ENCODE measurements at regions of chr16 and their contacts with region 1.

Region 1: GRCh38 chr16:67372664-67373063 is 20.6 kb downstream of the TPPP3 start:
- DNase-seq: peak; percentile 57
- H3K4me3 ChIP-seq: no peak overlapping the region; a peak in 1 of 4 replicates
- H3K27ac ChIP-seq: no peak overlapping the region
- H3K4me1 ChIP-seq: no peaks in the 10 kb centered on the region
- H3K27me3 ChIP-seq: no peaks in the 10 kb centered on the region; the same call in 1 of the 2 replicates
- CTCF ChIP-seq: peak; percentile 72
- EP300 ChIP-seq: no peak
- RAD21 ChIP-seq: peak; percentile 83

Region 2: DNA sequence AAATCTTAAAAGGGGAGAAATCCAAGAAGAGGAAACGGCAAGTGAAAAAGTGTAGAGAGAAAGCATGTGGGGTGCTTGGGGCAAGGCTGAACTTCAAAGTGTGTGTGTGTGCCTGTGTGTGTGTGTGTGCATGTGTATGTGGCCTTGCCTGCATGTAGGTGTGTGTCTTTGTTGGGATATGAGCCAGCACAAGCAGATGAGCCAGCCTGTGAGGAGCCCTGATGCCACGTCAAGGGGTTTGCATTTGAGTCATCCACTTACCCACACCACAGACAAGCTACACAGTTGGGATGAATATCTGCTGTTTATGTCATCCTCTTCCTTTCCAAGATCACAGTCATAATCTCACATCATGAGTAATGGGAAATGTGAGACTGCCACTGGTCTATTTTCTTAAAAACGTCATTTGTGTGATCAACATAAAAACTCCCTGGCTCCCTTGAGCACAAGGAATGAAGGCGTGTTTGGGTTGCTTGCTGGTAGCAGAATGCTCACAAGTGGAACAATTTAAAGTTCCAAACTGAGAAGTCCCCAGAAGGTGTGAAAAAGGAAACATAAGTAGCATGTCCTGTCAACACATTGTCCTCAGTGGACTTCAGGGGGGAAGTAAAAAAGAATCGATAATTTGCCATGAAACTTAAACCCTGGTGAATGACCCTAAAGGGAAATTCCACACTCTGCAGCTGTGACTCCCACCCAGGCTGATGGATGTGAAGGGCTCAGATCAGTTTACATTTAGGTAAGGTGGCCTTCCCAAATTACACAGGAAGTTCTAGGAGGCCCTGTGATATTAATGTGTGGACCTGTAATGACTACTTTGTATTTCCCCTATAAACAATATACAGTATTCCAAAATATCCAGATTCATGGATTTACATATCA is 60.8 kb before region 1 on chr16:
- CTCF ChIA-PET with region 1: no interaction called
- POLR2A ChIA-PET with region 1: no interaction called
- DNase-seq: peak; percentile 21
- H3K4me3 ChIP-seq: no peak overlapping the region
- H3K27ac ChIP-seq: peak overlapping the region in 1 of 2 experiments; percentile 93; a peak in 2 of 4 replicates
- H3K4me1 ChIP-seq: peaks cover 0 to 13% of the 10 kb centered on the region in 2 experiments; a peak in 1 of 4 replicates
- H3K27me3 ChIP-seq: no peaks in the 10 kb centered on the region
- CTCF ChIP-seq: no peak
- EP300 ChIP-seq: peak in 1 of 2 experiments; percentile 62; a peak in 1 of 4 replicates
- RAD21 ChIP-seq: no peak

Region 3: DNA sequence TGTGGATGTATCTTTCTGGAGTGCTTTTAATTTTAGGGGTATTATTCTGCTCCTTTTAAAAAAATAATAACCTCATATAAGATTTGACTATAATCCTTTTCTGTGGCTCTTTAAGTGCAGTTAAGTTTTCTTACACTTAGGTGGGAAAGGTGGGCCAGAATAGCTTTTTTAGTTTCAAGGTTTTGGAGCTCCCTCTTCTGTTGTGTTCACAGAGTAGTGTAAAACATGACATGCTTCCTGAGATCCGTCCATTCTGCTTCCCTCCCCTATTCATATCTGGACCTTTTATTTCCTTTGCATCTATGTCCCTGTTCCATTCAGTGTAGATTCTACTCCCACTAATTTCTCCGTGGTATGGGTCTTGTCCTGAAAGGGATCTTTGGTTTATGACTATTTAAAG is 33.2 kb before region 1 on chr16:
- CTCF ChIA-PET with region 1: no interaction called
- POLR2A ChIA-PET with region 1: no interaction called
- DNase-seq: no peak
- H3K4me3 ChIP-seq: no peak overlapping the region
- H3K27ac ChIP-seq: no peak overlapping the region
- H3K4me1 ChIP-seq: no peaks in the 10 kb centered on the region
- H3K27me3 ChIP-seq: no peaks in the 10 kb centered on the region
- CTCF ChIP-seq: peak; percentile 51
- EP300 ChIP-seq: no peak
- RAD21 ChIP-seq: peak; percentile 60

Region 4: DNA sequence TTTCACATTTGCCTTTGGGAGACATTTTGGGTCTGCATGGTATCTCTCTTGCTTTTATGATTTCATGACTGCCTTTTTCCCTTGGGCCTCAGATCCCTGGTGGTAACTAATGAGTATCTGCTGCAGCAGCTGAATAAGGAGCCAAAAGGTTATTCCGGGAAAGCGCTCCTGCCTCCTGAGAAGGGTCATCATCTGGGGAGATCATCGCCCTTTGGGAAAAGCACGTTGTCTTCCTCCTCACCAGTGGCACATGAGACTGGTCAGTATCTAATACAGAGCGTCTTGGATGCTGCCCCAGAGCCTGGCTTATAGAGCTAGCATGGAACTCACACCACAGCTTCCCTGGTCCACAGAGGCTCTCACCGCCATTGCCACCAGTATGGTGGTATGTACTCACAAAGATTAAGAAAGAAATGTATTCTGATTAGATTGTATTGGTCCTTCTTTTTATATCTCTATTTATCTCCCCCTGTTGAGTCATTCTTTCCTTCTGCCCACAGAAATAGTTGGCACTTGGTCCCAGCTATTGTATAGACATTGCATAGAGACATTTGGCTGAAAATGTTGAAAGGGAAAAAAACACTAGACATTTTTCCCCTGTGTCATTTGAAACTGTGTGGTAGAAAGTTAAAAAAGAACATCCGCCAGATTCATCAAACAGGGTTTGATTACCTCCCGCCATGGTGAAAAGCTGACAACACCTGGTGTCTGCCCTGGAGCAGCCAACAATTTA is 12.3 kb after region 1 on chr16:
- CTCF ChIA-PET with region 1: interaction called, 16 read pairs
- POLR2A ChIA-PET with region 1: no interaction called
- DNase-seq: no peak
- H3K4me3 ChIP-seq: no peak overlapping the region
- H3K27ac ChIP-seq: peak overlapping the region in 1 of 2 experiments; percentile 60; a peak in 2 of 4 replicates
- H3K4me1 ChIP-seq: peaks cover 4 to 10% of the 10 kb centered on the region in 2 experiments; a peak in 2 of 4 replicates
- H3K27me3 ChIP-seq: no peaks in the 10 kb centered on the region
- CTCF ChIP-seq: no peak
- EP300 ChIP-seq: no peak
- RAD21 ChIP-seq: no peak

Region 5: GRCh38 chr16:67393035-67393787 is 20.5 kb after region 1 on chr16 and contains the start of gene TPPP3:
- CTCF ChIA-PET with region 1: interaction called, 14 read pairs
- POLR2A ChIA-PET with region 1: no interaction called
- DNase-seq: peak; percentile 98
- H3K4me3 ChIP-seq: peak within 1 kb of the TSS; percentile 55 to 59
- H3K27ac ChIP-seq: peak within 1 kb of the TSS; percentile 64 to 65; a peak in 3 of 4 replicates
- H3K4me1 ChIP-seq: peaks cover 10 to 50% of the 10 kb centered on the region in 2 experiments; a peak in 2 of 4 replicates
- H3K27me3 ChIP-seq: no peaks in the 10 kb centered on the region
- CTCF ChIP-seq: peak; percentile 64
- EP300 ChIP-seq: no peak
- RAD21 ChIP-seq: peak; percentile 49
- polyA plus RNA-seq, gene TPPP3: 33.5 and 36.2 TPM in 2 replicates

Region 6: GRCh38 chr16:67415872-67416793 is 43.5 kb after region 1 on chr16 and contains the start of gene ZDHHC1:
- CTCF ChIA-PET with region 1: interaction called, 12 read pairs
- POLR2A ChIA-PET with region 1: no interaction called
- DNase-seq: peak; percentile 96
- H3K4me3 ChIP-seq: peak within 1 kb of the TSS; percentile 64 to 66
- H3K27ac ChIP-seq: peak within 1 kb of the TSS; percentile 53 to 79
- H3K4me1 ChIP-seq: no peaks in the 10 kb centered on the region; a peak in 1 of 4 replicates
- H3K27me3 ChIP-seq: no peaks in the 10 kb centered on the region
- CTCF ChIP-seq: peak; percentile 56
- EP300 ChIP-seq: no peak
- RAD21 ChIP-seq: peak; percentile 70
- polyA plus RNA-seq, gene ZDHHC1: 14.2 and 15.8 TPM in 2 replicates

Region 7: GRCh38 chr16:67464565-67464964 is 91.9 kb after region 1 on chr16:
- CTCF ChIA-PET with region 1: interaction called, 18 read pairs
- POLR2A ChIA-PET with region 1: no interaction called
- DNase-seq: no peak
- H3K4me3 ChIP-seq: no peak overlapping the region
- H3K27ac ChIP-seq: no peak overlapping the region
- H3K4me1 ChIP-seq: peaks cover 13 to 29% of the 10 kb centered on the region in 2 experiments; a peak in 3 of 4 replicates
- H3K27me3 ChIP-seq: no peaks in the 10 kb centered on the region
- CTCF ChIP-seq: no peak
- EP300 ChIP-seq: no peak
- RAD21 ChIP-seq: no peak